T-cell (primary cell): ENCODE measurements at regions of chr22 and their contacts with region 1.

Region 1: DNA sequence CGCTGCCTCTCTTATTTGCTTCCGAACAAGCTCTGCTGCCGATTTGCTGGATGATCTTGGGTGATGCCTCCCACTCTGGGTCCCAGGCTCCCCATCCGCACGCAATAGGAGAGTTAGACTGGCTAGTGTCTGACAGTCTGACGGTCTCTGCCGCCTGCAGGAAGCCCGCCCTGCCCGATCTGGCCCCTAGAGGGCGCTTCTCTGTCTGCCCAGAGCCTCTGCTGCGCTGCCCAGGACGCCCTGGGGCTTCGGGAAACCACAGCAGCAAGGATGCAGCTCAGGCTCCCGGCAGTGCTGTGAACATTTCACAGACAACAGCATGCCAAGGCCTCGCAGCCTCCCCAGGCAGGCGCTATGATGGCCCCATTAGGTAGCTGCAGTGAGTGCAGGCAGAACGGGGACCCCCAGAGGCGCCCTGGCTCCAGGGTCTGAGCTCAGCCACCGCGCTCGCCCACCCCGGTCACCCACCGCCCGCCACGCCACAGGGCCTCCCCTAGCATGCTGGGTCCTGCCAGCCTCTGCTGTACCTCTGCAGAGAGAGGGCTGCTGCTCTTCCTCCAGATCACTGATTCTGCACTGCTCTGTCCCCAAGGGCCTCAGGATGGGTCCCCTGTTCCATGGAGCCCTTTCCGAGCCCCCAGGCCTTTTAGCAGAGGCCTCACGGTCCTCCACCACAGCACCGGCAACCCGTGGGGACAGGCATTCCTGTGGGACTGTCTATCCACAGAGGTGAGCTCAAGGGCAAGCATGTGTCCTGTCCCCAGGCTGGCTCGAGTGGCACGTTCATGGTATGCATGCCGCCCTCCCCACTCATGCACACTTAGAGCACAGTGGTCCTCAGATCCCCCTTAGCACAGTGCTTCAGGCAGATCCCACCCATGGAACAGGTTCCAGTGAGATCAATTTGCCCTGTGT is 4.3 kb upstream of the BAIAP2L2 start:
- DNase-seq: peak; percentile 37 to 81 (median 68)
- ATAC-seq: peak; percentile 80 to 91 (median 82)
- H3K4me3 ChIP-seq: no peak overlapping the region
- H3K4me3 Mint-ChIP-seq: no peak overlapping the region
- H3K27ac ChIP-seq: no peak overlapping the region
- H3K27ac Mint-ChIP-seq: no peak overlapping the region
- H3K4me1 ChIP-seq: peaks cover 0 to 8% of the 10 kb centered on the region in 2 experiments
- H3K4me1 Mint-ChIP-seq: peaks cover 3 to 6% (median 5%) of the 10 kb centered on the region in 3 donors
- H3K27me3 ChIP-seq: no peaks in the 10 kb centered on the region
- H3K27me3 Mint-ChIP-seq: no peaks in the 10 kb centered on the region

Region 2: GRCh38 chr22:38083931-38084631 is 30.7 kb before region 1 on chr22 and contains the start of gene SLC16A8:
- CTCF ChIA-PET with region 1: interaction called, 3 to 10 read pairs
- POLR2A ChIA-PET with region 1: no interaction called
- DNase-seq: no peak
- ATAC-seq: no peak
- H3K4me3 ChIP-seq: no peak within 1 kb of the TSS
- H3K4me3 Mint-ChIP-seq: no peak within 1 kb of the TSS
- H3K27ac ChIP-seq: no peak within 1 kb of the TSS
- H3K27ac Mint-ChIP-seq: no peak within 1 kb of the TSS
- H3K4me1 ChIP-seq: peaks cover 0 to 21% of the 10 kb centered on the region in 2 experiments
- H3K4me1 Mint-ChIP-seq: peaks cover 0 to 7% (median 1%) of the 10 kb centered on the region in 3 donors
- H3K27me3 ChIP-seq: peaks cover 0 to 58% of the 10 kb centered on the region in 2 experiments
- H3K27me3 Mint-ChIP-seq: peaks cover 13 to 35% of the 10 kb centered on the region in 2 donors
- total RNA-seq, gene SLC16A8: 0.19 TPM in 1 of 5 donors, not detected in the others

Region 3: DNA sequence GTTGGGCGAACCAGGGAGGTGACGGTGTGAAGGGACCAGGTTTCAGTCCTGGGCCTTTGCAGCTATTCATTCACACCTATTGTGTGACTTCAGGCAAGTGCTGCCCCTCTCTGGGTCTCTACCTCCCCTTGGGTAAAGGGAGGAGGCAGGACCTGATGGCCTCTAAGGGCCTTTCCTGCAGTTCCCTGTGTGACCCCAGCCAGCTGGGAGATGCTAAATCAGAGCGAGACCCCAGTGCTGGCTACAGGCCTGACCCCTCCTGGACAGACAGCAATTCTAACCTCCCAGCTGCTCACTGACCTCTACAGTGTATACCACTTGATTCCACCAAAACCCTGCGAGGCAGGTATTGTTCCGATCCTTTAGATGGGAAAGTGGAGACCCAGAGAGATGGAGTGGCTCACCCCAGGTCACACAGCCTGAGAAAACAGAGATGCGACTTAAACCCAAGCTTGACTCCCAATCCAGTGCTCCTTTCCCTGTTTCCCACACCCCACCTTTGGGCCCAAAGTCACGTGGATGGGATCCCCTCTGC is 93.2 kb after region 1 on chr22:
- CTCF ChIA-PET with region 1: no interaction called
- POLR2A ChIA-PET with region 1: interaction called in 1 of 2 experiments, 12 read pairs
- DNase-seq: no peak
- ATAC-seq: no peak
- H3K4me3 ChIP-seq: no peak overlapping the region
- H3K4me3 Mint-ChIP-seq: no peak overlapping the region
- H3K27ac ChIP-seq: no peak overlapping the region
- H3K27ac Mint-ChIP-seq: no peak overlapping the region
- H3K4me1 ChIP-seq: peaks cover 1 to 22% of the 10 kb centered on the region in 2 experiments
- H3K4me1 Mint-ChIP-seq: peaks cover 18 to 25% (median 19%) of the 10 kb centered on the region in 3 donors
- H3K27me3 ChIP-seq: no peaks in the 10 kb centered on the region
- H3K27me3 Mint-ChIP-seq: no peaks in the 10 kb centered on the region